Activated B cell treated with CpG ODN at 0.5 μM for 24 hours (primary cell): ENCODE measurements at regions of chr14 and their contacts with region 1.

Region 1: DNA sequence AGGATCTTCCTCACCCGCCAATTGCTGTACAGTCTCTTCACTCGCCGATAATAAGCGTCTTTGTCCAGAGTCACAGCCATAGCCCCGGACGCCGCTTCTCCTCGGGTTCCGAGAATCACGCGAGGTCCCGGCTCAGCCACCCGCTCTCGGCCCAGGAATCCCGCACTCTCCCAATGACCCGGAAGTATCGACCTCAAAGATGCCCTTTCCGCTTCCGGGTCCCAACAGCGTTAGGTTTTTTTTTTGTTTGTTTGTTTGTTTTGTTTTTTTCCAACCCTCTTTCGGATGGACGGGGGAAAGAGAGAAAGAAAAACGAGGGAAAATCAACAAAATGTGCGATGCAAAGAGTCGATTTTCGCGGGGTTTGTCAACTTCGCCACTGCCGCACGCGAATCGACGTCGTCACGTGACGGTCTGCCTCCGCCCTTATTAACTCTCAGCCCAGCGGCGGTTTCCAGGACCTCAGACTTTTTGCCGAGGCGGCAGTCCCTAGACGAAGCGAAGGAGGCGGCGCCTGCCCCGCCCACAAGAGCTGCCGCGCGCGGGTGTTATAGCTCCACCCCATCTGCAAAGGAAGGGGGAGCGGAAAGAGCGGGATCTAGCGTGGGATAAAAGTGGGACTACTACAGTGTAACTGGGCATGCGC is at the start of gene SUPT16H:
- DNase-seq: peak; percentile 87
- ATAC-seq: peak; percentile 91
- H3K4me3 Mint-ChIP-seq: peak within 1 kb of the TSS; percentile 96
- H3K27ac Mint-ChIP-seq: peak within 1 kb of the TSS; percentile 99
- H3K4me1 Mint-ChIP-seq: peaks cover 40% of the 10 kb centered on the region
- H3K27me3 Mint-ChIP-seq: no peaks in the 10 kb centered on the region
- CTCF ChIP-seq: no peak
- total RNA-seq, gene SUPT16H: 100 and 102 TPM in 2 replicates

Region 2: DNA sequence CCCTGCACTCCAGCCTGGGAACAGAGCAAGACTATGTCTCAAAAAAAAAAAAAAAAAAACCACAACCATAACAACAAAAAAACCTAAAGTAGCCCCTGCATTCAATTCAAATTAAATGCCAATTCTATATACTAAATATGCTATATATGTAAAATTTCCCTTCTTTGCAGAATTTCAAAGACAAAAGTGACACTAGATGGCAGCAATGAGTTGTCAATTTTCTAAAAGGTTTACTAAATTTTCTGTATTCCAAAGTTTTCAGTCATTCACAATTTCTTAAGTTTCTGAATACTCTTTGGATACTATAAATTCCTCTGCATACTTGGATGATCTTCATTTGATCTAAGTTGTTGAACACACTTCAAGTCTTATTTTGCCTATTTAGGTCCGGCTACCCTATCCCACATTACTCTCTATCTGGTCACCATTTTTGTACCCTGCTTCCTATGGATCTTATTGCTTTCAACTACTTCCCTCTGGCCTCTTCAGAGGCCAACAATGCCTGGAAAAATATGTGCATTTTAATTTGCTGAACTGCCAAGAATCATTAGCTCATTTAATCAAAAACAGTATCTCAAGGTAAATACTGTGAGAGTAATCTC is 142.7 kb before region 1 on chr14:
- CTCF ChIA-PET with region 1: interaction called, 3 read pairs
- POLR2A ChIA-PET with region 1: no interaction called
- intact Hi-C with region 1: loop called (anchors 1 kb)
- DNase-seq: no peak
- ATAC-seq: no peak
- H3K4me3 Mint-ChIP-seq: no peak overlapping the region
- H3K27ac Mint-ChIP-seq: no peak overlapping the region
- H3K4me1 Mint-ChIP-seq: peaks cover 48% of the 10 kb centered on the region
- H3K27me3 Mint-ChIP-seq: no peaks in the 10 kb centered on the region
- CTCF ChIP-seq: no peak

Region 3: DNA sequence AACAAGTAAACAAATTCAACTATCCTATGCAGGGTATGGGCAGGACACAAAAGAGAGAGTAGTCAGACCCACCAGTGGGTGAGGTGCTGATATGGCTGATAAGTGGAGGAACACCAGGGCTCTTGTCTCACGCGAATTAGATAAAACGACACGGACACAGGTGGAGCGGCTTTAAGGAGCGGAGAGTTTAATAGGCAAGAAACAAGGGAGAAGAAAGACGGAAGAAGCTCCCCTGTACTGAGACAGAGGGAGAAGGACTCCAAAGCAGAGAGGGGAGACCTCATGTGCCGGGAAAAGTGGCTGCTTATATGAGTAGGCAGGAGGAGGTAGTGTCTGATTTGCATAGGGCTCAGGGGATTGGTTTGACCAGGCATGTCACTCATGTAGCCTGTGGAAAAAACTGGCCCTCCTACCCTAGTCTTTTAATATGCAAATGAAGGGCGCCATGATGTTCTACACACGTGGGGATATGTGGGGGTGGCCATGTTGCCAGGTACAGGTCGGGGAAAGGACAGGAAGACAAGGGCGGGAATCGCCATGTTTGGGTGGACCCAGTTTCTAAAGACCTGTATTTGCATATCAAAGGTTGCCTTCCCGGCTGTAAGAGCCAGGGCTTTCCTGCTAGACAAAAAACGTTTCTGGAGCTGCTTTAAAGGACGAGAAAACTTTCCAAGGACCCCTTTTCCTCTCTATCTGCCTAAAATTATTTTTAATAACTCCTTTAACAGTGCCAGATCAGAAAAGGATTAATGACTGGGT is 75.3 kb before region 1 on chr14:
- CTCF ChIA-PET with region 1: no interaction called
- POLR2A ChIA-PET with region 1: interaction called, 13 read pairs
- intact Hi-C with region 1: loop called (anchors 1 kb)
- DNase-seq: peak; percentile 51
- ATAC-seq: peak; percentile 85
- H3K4me3 Mint-ChIP-seq: peak overlapping the region; percentile 87
- H3K27ac Mint-ChIP-seq: peak overlapping the region; percentile 93
- H3K4me1 Mint-ChIP-seq: peaks cover 26% of the 10 kb centered on the region
- H3K27me3 Mint-ChIP-seq: no peaks in the 10 kb centered on the region
- CTCF ChIP-seq: no peak

Region 4: GRCh38 chr14:21352587-21352986 is 31.4 kb before region 1 on chr14:
- CTCF ChIA-PET with region 1: no interaction called
- POLR2A ChIA-PET with region 1: no interaction called
- intact Hi-C with region 1: no loop called
- DNase-seq: no peak
- ATAC-seq: peak; percentile 94
- H3K4me3 Mint-ChIP-seq: peak overlapping the region; percentile 61
- H3K27ac Mint-ChIP-seq: peak overlapping the region; percentile 87
- H3K4me1 Mint-ChIP-seq: peaks cover 17% of the 10 kb centered on the region
- H3K27me3 Mint-ChIP-seq: no peaks in the 10 kb centered on the region
- CTCF ChIP-seq: no peak

Region 5: GRCh38 chr14:21455911-21456667 is 72.1 kb after region 1 on chr14 and contains the start of gene CHD8:
- CTCF ChIA-PET with region 1: no interaction called
- POLR2A ChIA-PET with region 1: interaction called, 17 read pairs
- intact Hi-C with region 1: loop called (anchors 1 kb)
- DNase-seq: peak; percentile 91
- ATAC-seq: peak; percentile 97
- H3K4me3 Mint-ChIP-seq: peak within 1 kb of the TSS; percentile 98
- H3K27ac Mint-ChIP-seq: peak within 1 kb of the TSS; percentile 99
- H3K4me1 Mint-ChIP-seq: peaks cover 34% of the 10 kb centered on the region
- H3K27me3 Mint-ChIP-seq: no peaks in the 10 kb centered on the region
- CTCF ChIP-seq: no peak
- total RNA-seq, gene CHD8: 113 and 133 TPM in 2 replicates

Region 6: GRCh38 chr14:21510735-21511657 is 127.0 kb after region 1 on chr14 and contains the start of gene METTL3:
- CTCF ChIA-PET with region 1: no interaction called
- POLR2A ChIA-PET with region 1: interaction called, 6 read pairs
- intact Hi-C with region 1: loop called (anchors 1 kb)
- DNase-seq: peak; percentile 80
- ATAC-seq: peak; percentile 99
- H3K4me3 Mint-ChIP-seq: peak within 1 kb of the TSS; percentile 99
- H3K27ac Mint-ChIP-seq: peak within 1 kb of the TSS; percentile 96
- H3K4me1 Mint-ChIP-seq: peaks cover 29% of the 10 kb centered on the region
- H3K27me3 Mint-ChIP-seq: peaks cover 3% of the 10 kb centered on the region
- CTCF ChIP-seq: no peak
- total RNA-seq, gene METTL3: 81.9 and 94.5 TPM in 2 replicates

Region 7: DNA sequence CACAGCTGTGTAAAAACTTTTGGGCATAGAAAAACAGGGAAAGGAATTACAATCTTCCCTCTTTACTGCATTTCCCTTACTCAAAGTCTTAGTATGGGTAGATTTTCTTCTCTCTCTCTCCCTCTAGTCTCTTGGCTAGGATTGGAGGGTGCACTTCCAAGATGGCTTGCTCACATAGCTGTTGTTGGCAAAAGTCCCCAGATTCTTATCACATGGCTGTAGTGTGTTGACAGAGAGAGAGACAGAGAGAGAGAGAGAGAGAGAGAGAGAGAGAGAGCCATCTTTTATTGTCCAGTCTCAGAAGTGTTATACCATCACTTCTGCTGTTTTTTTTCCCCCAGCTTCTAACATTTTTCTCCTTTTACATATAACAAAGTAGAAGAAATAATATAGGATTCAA is 263.4 kb after region 1 on chr14:
- CTCF ChIA-PET with region 1: no interaction called
- POLR2A ChIA-PET with region 1: no interaction called
- intact Hi-C with region 1: no loop called
- DNase-seq: no peak
- ATAC-seq: no peak
- H3K4me3 Mint-ChIP-seq: no peak overlapping the region
- H3K27ac Mint-ChIP-seq: no peak overlapping the region
- H3K4me1 Mint-ChIP-seq: no peaks in the 10 kb centered on the region
- H3K27me3 Mint-ChIP-seq: peaks cover 1% of the 10 kb centered on the region
- CTCF ChIP-seq: no peak